Activated CD4-positive, alpha-beta T cell treated with anti-CD3 and anti-CD28 coated beads, Interleukin-2, amount 10 ng/mL, durations not matched to agents 24 days and 14 days (primary cell): ENCODE measurements at regions of chr1 and their contacts with region 1.

Region 1: DNA sequence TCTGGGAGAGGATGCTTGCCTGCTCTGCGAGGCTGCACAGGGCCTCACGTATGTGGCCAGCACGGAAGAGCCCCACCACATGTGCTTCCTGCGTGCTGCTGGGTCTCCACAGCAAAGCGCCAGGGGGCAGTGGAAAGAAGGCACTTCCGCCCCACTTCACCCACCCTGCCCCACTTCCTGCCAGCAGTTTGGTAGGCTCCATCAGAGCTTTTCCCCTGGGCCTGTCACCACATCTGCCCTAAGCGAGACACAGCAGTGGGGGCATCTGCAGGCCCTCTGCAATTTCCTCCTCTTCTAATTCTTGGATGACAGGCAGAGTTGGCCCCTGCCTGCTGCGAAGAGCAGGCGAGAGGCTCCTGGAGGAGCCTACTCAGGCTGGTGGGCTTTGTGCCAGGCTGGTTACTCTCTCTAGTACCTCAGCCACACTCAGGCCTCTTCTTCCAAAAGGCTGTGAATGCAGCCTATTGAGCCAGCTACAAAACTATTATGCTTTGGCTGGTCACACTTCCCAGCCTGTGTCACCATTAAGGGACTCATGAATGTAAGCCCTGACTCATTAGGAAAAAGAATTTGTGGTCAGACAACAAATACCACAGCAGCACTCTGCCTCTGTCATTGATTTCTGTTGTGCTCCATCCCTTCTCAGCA is 25.0 kb downstream of the CD244 start:
- DNase-seq: peak; percentile 94
- H3K4me3 Mint-ChIP-seq: peak overlapping the region; percentile 69
- H3K27ac Mint-ChIP-seq: peak overlapping the region; percentile 98
- H3K4me1 Mint-ChIP-seq: peaks cover 43% of the 10 kb centered on the region
- H3K27me3 Mint-ChIP-seq: no peaks in the 10 kb centered on the region

Region 2: DNA sequence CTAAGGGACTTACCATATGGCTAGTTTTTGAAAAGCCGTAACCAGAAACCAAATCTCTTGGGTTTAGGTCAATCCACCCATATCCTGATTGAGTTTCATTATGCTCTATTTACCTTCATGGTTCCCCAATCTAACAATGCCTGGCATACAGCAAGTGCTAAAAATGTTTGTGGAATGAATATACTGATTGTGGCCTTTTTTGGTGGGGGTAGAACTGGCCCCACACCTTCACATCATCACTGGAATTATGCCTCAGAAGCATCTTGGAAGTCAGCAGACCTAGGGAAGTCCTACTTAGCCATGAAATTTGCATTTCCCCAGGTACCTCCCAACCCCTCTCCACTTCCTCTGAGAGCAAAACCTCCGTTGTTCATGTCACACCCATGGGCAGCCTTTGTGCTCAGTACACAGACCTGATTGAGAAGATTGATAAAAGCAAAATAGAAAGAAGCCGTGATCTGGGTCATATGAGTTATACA is 173.1 kb before region 1 on chr1:
- intact Hi-C with region 1: no loop called
- DNase-seq: peak; percentile 86
- H3K4me3 Mint-ChIP-seq: peak overlapping the region; percentile 74
- H3K27ac Mint-ChIP-seq: peak overlapping the region; percentile 93
- H3K4me1 Mint-ChIP-seq: peaks cover 63% of the 10 kb centered on the region
- H3K27me3 Mint-ChIP-seq: no peaks in the 10 kb centered on the region

Region 3: DNA sequence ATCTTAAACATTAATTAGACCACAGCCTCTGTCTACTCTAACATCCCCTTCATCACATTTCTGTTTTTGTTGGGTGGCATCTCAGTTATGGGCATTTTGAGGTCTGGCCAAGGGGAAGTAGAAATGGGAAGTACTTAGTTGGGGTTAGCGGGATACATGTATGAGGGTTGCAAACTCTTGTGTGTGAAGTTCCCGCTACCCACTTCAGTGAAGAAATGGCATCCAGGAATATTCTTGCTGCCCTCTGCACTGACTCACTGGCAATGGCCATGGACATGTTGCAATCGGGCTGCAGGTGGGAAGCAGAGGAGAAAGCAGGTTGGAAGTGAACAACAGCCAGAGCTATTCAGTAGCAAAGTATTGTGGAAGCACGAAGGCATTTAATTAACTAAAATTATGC is 133.4 kb before region 1 on chr1:
- intact Hi-C with region 1: no loop called
- DNase-seq: no peak
- H3K4me3 Mint-ChIP-seq: peak overlapping the region; percentile 65
- H3K27ac Mint-ChIP-seq: peak overlapping the region; percentile 78
- H3K4me1 Mint-ChIP-seq: peaks cover 59% of the 10 kb centered on the region
- H3K27me3 Mint-ChIP-seq: no peaks in the 10 kb centered on the region

Region 4: GRCh38 chr1:160795951-160796383 is 41.7 kb before region 1 on chr1 and contains the start of gene LY9:
- intact Hi-C with region 1: loop called (anchors 2 kb)
- DNase-seq: peak; percentile 93
- H3K4me3 Mint-ChIP-seq: peak within 1 kb of the TSS; percentile 83
- H3K27ac Mint-ChIP-seq: peak within 1 kb of the TSS; percentile 83
- H3K4me1 Mint-ChIP-seq: peaks cover 54% of the 10 kb centered on the region
- H3K27me3 Mint-ChIP-seq: peaks cover 4% of the 10 kb centered on the region
- total RNA-seq, gene LY9: 0.30 and 0.85 TPM in 2 replicates

Region 5: DNA sequence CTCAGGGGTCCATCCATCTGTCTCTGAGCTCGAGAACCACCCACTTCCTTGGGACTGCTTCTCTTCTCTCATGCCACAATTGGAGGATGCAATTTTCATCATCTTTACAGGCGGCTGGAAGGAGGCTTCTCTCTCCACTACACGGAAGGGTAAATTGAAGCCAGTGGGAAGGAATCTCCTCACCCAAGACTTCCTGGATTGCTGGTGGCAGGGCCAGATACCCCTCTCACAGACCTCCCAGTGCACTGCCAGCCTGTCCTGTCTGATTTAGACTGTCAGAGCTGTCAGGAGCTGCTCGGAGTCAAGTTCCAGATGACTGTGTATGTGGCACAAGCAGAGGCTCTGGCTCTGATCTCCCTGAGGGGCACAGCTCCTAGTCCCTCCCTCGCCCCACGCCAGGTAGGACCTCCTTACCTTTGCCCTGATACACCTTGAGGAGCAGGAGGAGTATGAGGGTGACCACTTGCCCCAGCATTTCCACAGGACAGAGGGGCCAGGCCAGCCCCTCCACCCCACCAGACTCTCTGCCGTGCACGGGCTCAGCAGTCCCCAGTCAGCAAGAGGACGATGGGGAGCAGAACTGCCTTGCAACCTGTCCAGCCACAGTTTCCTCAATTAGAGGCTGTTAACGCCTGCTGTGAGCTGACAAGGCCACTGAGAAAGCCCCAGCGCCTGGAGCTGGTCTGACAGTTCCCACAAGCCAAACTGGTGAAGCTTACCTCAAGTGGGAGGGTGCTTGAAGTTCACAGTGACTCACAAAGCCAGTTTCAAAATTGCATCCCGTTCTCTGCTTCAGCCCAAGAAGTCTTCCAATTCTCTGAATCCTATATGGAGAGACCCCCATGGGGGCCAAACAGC is 24.8 kb after region 1 on chr1 and contains the start of gene CD244:
- intact Hi-C with region 1: loop called (anchors 1 kb)
- DNase-seq: peak; percentile 81
- H3K4me3 Mint-ChIP-seq: peak within 1 kb of the TSS; percentile 24
- H3K27ac Mint-ChIP-seq: peak within 1 kb of the TSS; percentile 65
- H3K4me1 Mint-ChIP-seq: peaks cover 22% of the 10 kb centered on the region
- H3K27me3 Mint-ChIP-seq: peaks cover 2% of the 10 kb centered on the region
- total RNA-seq, gene CD244: not detected in 2 replicates

Region 6: DNA sequence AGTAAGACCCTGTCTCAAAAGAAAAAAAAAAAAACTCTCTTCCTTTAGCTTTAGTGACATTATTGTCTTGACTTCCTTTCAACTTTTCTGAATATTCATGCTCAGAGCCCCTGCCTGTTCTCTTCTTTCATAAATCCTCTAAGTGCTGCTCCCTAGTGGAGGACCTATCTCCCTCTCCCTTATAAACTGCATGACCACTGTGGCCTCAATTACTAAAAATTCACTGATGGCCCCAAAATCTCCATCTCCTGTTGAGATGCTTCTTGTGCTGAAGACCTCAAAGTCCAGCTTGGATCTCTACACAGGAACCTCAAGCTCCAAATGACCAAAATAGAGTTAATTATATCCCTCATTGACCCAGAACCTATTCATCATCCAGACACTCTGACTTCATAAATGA is 39.5 kb after region 1 on chr1:
- intact Hi-C with region 1: loop called (anchors 2 kb)
- DNase-seq: peak; percentile 71
- H3K4me3 Mint-ChIP-seq: no peak overlapping the region
- H3K27ac Mint-ChIP-seq: no peak overlapping the region
- H3K4me1 Mint-ChIP-seq: peaks cover 15% of the 10 kb centered on the region
- H3K27me3 Mint-ChIP-seq: peaks cover 7% of the 10 kb centered on the region

Region 7: GRCh38 chr1:160884579-160884978 is 46.9 kb after region 1 on chr1:
- intact Hi-C with region 1: loop called (anchors 1 kb)
- DNase-seq: peak; percentile 76
- H3K4me3 Mint-ChIP-seq: no peak overlapping the region
- H3K27ac Mint-ChIP-seq: no peak overlapping the region
- H3K4me1 Mint-ChIP-seq: peaks cover 5% of the 10 kb centered on the region
- H3K27me3 Mint-ChIP-seq: peaks cover 9% of the 10 kb centered on the region

Region 8: DNA sequence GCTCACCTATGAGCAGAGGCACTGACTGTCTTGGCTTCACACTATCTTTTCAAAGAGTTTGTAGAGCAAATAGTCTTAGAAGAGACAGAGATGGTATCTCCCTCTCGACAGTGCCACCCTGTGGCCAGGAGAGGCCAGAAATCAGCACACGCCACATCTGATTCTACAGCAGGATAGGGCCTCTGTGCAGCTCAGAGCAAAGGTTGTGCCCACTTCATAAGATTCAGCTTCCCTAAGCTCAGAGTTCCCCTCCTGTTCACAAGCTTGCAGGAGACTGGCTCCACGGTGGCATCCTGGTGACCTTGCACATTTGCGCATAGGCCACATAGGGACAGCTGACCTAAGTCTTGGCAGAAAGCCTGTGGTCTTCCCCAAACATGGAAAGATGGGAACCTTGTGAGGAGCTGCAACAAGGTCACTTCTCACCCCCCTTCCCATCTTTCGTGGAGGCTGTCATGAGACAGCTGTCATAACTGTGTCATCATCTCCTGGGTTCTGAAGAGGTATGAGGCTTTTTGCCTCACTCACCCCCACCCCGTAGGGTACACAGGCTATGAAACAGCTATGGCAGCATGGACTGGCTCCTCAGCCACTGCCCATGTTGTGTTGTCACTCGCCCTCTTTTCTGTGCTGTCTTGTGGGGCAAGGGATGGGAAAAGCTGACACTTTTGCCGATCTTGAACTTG is 113.9 kb after region 1 on chr1:
- intact Hi-C with region 1: loop called (anchors 1 kb)
- DNase-seq: peak; percentile 91
- H3K4me3 Mint-ChIP-seq: no peak overlapping the region
- H3K27ac Mint-ChIP-seq: no peak overlapping the region
- H3K4me1 Mint-ChIP-seq: peaks cover 6% of the 10 kb centered on the region
- H3K27me3 Mint-ChIP-seq: peaks cover 9% of the 10 kb centered on the region

Region 9: DNA sequence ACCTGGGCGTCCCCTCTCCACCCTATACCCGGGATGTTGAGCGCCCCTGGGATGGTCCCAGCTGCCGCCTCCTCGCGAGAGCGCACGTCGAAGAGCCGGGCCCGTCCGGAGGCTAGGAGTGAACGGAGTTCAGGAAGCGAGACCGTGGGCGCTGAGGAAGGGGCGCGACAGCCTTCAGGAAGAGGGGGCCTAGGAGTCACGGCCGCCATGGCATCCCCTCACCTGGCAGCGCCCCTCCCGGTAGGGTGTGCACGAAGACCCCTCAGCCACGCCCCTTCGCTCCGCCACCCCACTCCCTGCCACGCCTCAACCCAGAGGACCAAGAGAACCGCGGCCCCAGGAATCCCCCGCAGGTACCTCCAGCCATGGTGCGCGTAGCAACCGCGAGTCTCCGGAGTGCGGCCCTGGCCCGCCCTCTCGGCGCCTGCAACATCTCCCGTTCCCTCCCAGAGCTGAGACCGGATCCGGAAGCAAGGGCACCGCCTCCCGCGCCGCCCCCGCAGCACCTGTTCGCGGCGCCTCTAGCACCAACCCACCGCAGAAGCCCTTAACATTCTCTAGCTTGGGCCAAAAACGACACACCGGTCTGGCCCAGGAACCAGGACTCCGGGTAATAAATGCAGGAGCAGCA is 201.0 kb after region 1 on chr1 and contains the start of gene TSTD1:
- intact Hi-C with region 1: no loop called
- DNase-seq: peak; percentile 96
- H3K4me3 Mint-ChIP-seq: peak within 1 kb of the TSS; percentile 97
- H3K27ac Mint-ChIP-seq: peak within 1 kb of the TSS; percentile 93
- H3K4me1 Mint-ChIP-seq: peaks cover 32% of the 10 kb centered on the region
- H3K27me3 Mint-ChIP-seq: no peaks in the 10 kb centered on the region
- total RNA-seq, gene TSTD1: 41.7 and 49.7 TPM in 2 replicates

Region 10: DNA sequence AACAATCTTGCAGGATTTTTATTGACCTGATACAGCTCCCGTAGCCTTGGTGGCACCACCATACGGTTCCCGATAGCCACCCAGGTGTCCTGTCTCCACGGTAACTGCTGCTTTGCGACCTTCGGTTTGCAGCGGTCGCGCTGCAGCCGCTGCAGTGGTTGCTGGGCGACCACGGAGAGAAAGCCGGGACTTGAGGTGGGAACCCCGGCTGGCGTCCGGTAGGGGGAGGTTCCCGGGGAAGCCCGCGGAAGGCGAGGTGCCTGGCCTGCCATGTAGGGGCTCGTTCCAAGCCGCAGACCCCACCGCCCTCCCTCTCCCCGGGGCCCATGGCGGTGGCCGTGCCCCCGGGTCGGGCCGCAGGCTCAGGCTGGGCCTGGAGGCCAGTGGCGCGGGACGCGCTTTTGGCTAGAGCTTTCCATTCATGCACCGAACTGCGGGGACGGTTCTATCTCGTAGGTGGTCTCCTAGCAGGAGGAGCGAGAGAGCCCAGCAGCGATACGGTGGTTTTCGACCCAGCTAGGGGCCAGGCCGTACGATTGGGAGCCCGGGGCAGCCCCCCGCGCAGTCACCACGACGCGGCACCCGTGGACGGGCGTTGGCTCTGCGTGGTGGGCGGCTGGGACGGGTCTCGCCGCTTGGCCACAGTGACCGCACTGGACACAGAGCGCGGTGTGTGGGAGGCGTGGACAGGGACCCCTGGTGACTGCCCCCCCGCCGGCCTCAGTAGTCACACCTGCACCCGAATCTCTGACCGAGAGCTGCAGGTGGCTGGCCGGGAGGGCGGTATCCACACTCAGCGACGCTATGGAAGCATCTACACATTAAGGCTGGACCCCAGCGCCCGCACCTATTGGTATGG is 260.8 kb after region 1 on chr1 and contains the start of gene KLHDC9:
- intact Hi-C with region 1: loop called (anchors 5 kb)
- DNase-seq: peak; percentile 92
- H3K4me3 Mint-ChIP-seq: peak within 1 kb of the TSS; percentile 80
- H3K27ac Mint-ChIP-seq: peak within 1 kb of the TSS; percentile 93
- H3K4me1 Mint-ChIP-seq: peaks cover 39% of the 10 kb centered on the region
- H3K27me3 Mint-ChIP-seq: peaks cover 2% of the 10 kb centered on the region
- total RNA-seq, gene KLHDC9: not detected in 2 replicates

Region 11: DNA sequence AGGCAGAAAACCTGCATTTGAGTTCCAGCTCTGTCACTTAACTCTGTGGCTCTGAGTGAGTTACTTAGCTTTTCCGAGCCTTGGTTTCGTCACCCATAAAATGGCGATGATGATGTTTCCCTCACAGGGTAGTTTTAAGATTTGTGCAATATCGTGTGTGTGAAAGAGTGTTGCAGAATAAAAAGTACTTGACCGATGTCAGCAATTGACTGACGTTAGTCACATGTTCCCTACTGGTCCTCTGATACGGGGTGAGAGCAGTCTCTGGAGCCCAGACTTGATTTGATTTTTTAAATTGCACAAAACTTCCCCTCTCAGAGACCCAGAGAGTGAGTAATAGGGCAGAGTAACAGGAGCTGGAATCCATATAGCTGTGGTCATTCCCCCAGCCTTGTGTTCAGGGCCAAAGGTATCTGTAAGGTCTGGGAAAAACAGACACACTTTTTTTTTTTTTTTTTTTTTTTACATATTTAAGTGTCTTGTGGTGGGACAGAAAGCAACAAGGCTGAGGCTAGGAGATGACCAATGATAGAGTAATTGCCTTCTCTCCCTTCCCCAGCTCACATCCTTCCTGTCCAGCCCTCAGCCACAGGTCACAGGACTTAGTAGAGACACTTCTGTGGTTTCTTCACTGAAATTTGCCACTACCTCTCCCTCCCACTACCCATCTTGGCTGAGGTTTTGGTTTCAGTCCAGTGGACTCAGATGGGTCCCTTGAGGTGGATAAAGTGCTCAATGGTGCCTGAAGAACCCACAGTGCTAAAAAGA is 379.4 kb after region 1 on chr1:
- intact Hi-C with region 1: no loop called
- DNase-seq: peak; percentile 60
- H3K4me3 Mint-ChIP-seq: no peak overlapping the region
- H3K27ac Mint-ChIP-seq: peak overlapping the region; percentile 64
- H3K4me1 Mint-ChIP-seq: peaks cover 39% of the 10 kb centered on the region
- H3K27me3 Mint-ChIP-seq: no peaks in the 10 kb centered on the region